ENCODE measurements at regions of chr1 and their contacts with region 1.

Region 1: GRCh38 chr1:160006312-160006940 is 25.4 kb downstream of the PIGM start:
- DNase-seq: peak; percentile 38 to 83 (median 66)
- ATAC-seq: peak; percentile 75 to 85 (median 83)
- H3K4me3 ChIP-seq: no peak overlapping the region
- H3K4me3 Mint-ChIP-seq: no peak overlapping the region
- H3K27ac ChIP-seq: no peak overlapping the region
- H3K27ac Mint-ChIP-seq: no peak overlapping the region
- H3K4me1 ChIP-seq: no peaks in the 10 kb centered on the region
- H3K4me1 Mint-ChIP-seq: no peaks in the 10 kb centered on the region
- H3K27me3 ChIP-seq: peaks cover 2 to 14% of the 10 kb centered on the region in 2 experiments
- H3K27me3 Mint-ChIP-seq: peaks cover 10 to 12% of the 10 kb centered on the region in 2 donors

Region 2: DNA sequence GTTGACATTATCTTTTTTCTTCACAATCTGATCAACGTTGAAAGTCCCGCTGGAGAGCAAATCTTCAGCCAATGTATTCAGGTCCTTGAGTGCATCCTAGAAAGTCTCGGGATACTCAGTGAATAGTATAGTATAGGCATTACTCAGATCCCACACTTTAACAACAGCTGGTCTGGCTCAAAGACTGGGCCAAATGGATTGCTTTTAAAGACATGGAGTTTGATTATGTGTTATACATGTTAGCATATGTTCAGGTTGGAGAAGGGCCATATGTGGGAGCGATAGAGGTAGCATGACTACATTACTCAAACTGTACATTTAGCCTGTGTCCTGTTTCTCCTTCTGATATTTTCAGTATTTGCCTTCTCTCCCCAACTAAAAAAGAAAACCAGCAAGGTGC is 1368.3 kb before region 1 on chr1:
- CTCF ChIA-PET with region 1: interaction called in 1 of 2 experiments, 10 read pairs
- POLR2A ChIA-PET with region 1: no interaction called
- DNase-seq: no peak
- ATAC-seq: no peak
- H3K4me3 ChIP-seq: no peak overlapping the region
- H3K4me3 Mint-ChIP-seq: no peak overlapping the region
- H3K27ac ChIP-seq: no peak overlapping the region
- H3K27ac Mint-ChIP-seq: no peak overlapping the region
- H3K4me1 ChIP-seq: no peaks in the 10 kb centered on the region
- H3K4me1 Mint-ChIP-seq: no peaks in the 10 kb centered on the region
- H3K27me3 ChIP-seq: no peaks in the 10 kb centered on the region
- H3K27me3 Mint-ChIP-seq: peaks cover 0 to 4% of the 10 kb centered on the region in 2 donors

Region 3: DNA sequence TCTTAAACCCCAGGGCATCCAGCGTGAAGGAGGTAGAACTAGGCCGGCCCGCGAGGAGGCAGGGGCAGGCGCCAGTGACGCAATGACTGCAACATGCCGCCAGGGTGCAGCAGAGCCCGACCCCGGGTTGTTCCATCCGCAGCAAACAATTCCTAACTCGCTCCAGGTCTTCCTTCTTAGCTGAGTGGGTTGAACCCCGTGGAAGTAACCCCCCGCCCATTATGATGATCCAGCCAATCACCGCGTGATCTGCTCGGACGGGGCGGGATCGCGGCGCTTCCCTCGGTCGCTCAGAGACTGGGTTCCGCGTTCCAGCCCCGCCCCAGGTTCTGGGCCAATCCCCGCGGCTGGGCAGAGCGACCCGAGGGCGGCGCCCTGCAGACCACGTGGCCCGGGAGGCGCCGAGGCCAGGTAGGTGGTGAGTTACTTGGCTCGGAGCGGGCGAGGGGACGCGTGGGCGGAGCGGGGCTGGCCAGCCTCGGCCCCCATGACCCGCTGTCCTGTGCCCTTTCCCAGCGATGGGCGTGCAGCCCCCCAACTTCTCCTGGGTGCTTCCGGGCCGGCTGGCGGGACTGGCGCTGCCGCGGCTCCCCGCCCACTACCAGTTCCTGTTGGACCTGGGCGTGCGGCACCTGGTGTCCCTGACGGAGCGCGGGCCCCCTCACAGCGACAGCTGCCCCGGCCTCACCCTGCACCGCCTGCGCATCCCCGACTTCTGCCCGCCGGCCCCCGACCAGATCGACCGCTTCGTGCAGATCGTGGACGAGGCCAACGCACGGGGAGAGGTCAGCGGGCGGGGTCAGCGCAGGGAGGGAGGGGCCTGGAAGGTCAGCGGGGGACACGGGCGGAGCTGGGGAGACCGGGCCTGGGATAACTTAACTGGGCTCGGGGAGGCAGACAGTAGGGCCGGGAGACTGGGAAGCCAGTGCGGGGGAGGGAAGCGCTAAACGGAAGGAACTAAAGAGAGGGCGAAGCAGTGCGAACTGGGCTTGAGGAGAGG is 225.5 kb before region 1 on chr1 and contains the start of gene DUSP23:
- CTCF ChIA-PET with region 1: interaction called in 1 of 2 experiments, 14 read pairs
- POLR2A ChIA-PET with region 1: no interaction called
- DNase-seq: peak; percentile 89 to 98 (median 92)
- ATAC-seq: peak; percentile 95 to 98 (median 96)
- H3K4me3 ChIP-seq: peak within 1 kb of the TSS; percentile 48 to 56
- H3K4me3 Mint-ChIP-seq: peak within 1 kb of the TSS; percentile 77 to 81 (median 78)
- H3K27ac ChIP-seq: peak within 1 kb of the TSS; percentile 48
- H3K27ac Mint-ChIP-seq: peak within 1 kb of the TSS; percentile 73 to 84
- H3K4me1 ChIP-seq: peaks cover 7 to 16% of the 10 kb centered on the region in 2 experiments
- H3K4me1 Mint-ChIP-seq: peaks cover 23 to 50% (median 47%) of the 10 kb centered on the region in 3 donors
- H3K27me3 ChIP-seq: no peaks in the 10 kb centered on the region
- H3K27me3 Mint-ChIP-seq: no peaks in the 10 kb centered on the region
- total RNA-seq, gene DUSP23: 8.8 to 17.1 (median 14.3) TPM

Region 4: DNA sequence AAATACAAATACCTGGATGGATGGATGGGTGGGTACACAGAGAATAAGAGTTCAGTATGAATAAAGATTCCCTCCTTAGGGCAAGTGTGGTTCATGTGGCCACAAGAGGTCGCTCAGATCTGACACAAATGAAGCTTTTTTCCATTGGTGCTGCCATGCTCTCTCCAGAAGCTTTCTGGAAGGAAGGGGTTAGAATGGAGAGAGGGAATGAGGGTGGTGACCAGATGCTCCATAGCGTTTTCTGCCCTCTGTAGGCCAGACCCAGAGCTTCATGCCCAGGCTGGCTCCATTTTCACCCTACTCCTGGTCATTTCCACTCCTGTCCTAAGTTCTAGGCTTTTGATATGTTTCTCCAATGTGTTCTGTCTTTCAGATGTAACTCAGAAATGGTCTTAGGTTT is 207.5 kb before region 1 on chr1:
- CTCF ChIA-PET with region 1: interaction called, 3 to 16 read pairs
- POLR2A ChIA-PET with region 1: no interaction called
- DNase-seq: peak in 27 of 35 experiments; percentile 7 to 73 (median 33)
- ATAC-seq: peak; percentile 33 to 64 (median 48)
- H3K4me3 ChIP-seq: no peak overlapping the region
- H3K4me3 Mint-ChIP-seq: no peak overlapping the region
- H3K27ac ChIP-seq: no peak overlapping the region
- H3K27ac Mint-ChIP-seq: no peak overlapping the region
- H3K4me1 ChIP-seq: peaks cover 12 to 34% of the 10 kb centered on the region in 2 experiments
- H3K4me1 Mint-ChIP-seq: peaks cover 24 to 38% (median 30%) of the 10 kb centered on the region in 3 donors
- H3K27me3 ChIP-seq: peaks cover 0 to 5% of the 10 kb centered on the region in 2 experiments
- H3K27me3 Mint-ChIP-seq: peaks cover 2 to 8% of the 10 kb centered on the region in 2 donors

Region 5: GRCh38 chr1:160018900-160019299 is 12.5 kb after region 1 on chr1:
- CTCF ChIA-PET with region 1: interaction called, 5 to 11 read pairs
- POLR2A ChIA-PET with region 1: no interaction called
- DNase-seq: no peak
- ATAC-seq: no peak
- H3K4me3 ChIP-seq: no peak overlapping the region
- H3K4me3 Mint-ChIP-seq: no peak overlapping the region
- H3K27ac ChIP-seq: no peak overlapping the region
- H3K27ac Mint-ChIP-seq: no peak overlapping the region
- H3K4me1 ChIP-seq: no peaks in the 10 kb centered on the region
- H3K4me1 Mint-ChIP-seq: no peaks in the 10 kb centered on the region
- H3K27me3 ChIP-seq: peaks cover 0 to 7% of the 10 kb centered on the region in 2 experiments
- H3K27me3 Mint-ChIP-seq: peaks cover 5 to 18% of the 10 kb centered on the region in 2 donors

Region 6: DNA sequence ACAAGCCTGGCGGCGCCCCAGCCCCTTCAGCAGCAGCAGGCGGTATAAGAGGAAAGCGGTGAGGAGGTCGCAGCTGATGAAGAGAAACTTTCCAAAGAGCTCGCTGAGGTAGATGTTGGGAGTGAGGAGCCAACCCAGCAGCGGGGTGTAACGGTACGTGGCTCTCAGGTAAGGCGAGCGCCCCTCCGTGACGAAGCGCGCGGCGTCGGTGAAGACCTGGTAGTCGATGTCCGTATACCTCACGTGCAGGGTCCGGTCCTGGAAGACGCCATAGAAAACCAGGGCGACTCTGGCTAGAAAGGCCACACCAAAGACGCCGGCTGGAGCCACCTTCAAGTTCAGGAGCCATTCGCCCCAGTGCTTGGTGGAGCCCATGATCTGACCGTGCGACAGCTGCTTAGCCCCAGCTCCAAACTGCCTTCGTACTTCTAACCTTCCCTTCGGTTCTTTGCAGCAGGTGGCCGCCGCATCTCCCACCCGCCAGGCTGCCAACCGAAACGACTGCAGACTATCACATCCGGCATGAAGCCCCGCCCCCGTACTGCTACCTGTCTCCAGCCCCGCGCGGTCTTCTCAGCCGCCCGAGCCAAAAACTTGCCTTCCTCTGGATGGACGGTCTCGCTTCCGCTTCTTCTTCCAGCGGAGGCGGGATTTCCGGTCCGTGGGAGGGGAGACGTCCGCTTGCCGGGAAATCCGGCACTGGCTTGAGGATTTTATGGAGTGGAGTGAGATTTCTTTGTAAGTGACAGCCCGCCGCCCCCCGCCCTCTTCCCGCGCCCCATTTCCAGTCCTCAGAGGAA is 25.1 kb after region 1 on chr1 and contains the start of gene PIGM:
- CTCF ChIA-PET with region 1: interaction called, 3 to 11 read pairs
- POLR2A ChIA-PET with region 1: no interaction called
- DNase-seq: peak; percentile 81 to 95 (median 91)
- ATAC-seq: peak; percentile 98 to 99 (median 98)
- H3K4me3 ChIP-seq: peak within 1 kb of the TSS; percentile 74 to 75
- H3K4me3 Mint-ChIP-seq: peak within 1 kb of the TSS; percentile 94 to 96 (median 96)
- H3K27ac ChIP-seq: peak within 1 kb of the TSS; percentile 30
- H3K27ac Mint-ChIP-seq: peak within 1 kb of the TSS; percentile 90 to 92
- H3K4me1 ChIP-seq: peaks cover 9 to 20% of the 10 kb centered on the region in 2 experiments
- H3K4me1 Mint-ChIP-seq: peaks cover 42 to 44% (median 43%) of the 10 kb centered on the region in 3 donors
- H3K27me3 ChIP-seq: no peaks in the 10 kb centered on the region
- H3K27me3 Mint-ChIP-seq: no peaks in the 10 kb centered on the region
- total RNA-seq, gene PIGM: 3.2 to 9.7 (median 8.4) TPM